ENCODE measurements at regions of chr9 and their contacts with region 1.

Region 1: GRCh38 chr9:125988479-125989050 is 241.4 kb downstream of the PBX3 start:
- DNase-seq: peak in 1 of 2 donors; percentile 47
- H3K4me3 ChIP-seq: no peak overlapping the region
- H3K27ac ChIP-seq: no peak overlapping the region
- H3K4me1 ChIP-seq: no peaks in the 10 kb centered on the region
- H3K27me3 ChIP-seq: no peaks in the 10 kb centered on the region
- CTCF ChIP-seq: no peak
- POLR2A ChIP-seq: no peak

Region 2: GRCh38 chr9:125889476-125890419 is 98.8 kb before region 1 on chr9:
- intact Hi-C with region 1: loop called (anchors 10 kb)
- DNase-seq: no peak
- H3K4me3 ChIP-seq: peak overlapping the region; percentile 53 to 69 (median 55)
- H3K27ac ChIP-seq: peak overlapping the region in 1 of 2 donors; percentile 18
- H3K4me1 ChIP-seq: no peaks in the 10 kb centered on the region
- H3K27me3 ChIP-seq: no peaks in the 10 kb centered on the region
- CTCF ChIP-seq: no peak
- POLR2A ChIP-seq: no peak